Calu3 (cell line): ENCODE measurements at regions of chr17 and their contacts with region 1.

Region 1: GRCh38 chr17:2271985-2272702 is 31.4 kb downstream of the SMG6 start:
- DNase-seq: no peak
- H3K4me3 Mint-ChIP-seq: no peak overlapping the region
- H3K27ac Mint-ChIP-seq: no peak overlapping the region
- H3K4me1 Mint-ChIP-seq: no peaks in the 10 kb centered on the region
- H3K27me3 Mint-ChIP-seq: no peaks in the 10 kb centered on the region
- CTCF ChIP-seq: no peak

Region 2: DNA sequence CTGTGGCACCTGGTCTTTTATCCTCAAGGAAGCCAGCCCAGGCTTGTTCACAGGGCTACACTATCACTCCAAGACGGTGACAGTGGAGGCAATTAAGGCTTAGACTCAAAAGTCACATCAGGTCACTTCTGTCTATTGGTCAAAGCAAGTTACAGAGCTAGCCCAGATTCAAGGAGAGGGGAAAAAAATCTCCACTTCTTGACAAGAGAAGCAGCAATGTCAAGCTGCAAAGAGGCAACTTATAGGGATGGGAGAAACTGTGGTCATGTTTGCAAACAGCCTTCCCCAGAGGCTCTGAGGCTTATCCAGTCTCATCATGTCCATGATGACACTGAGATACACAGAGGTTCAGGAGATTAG is 478.7 kb before region 1 on chr17:
- CTCF ChIA-PET with region 1: interaction called, 10 read pairs
- intact Hi-C with region 1: no loop called
- DNase-seq: no peak
- H3K4me3 Mint-ChIP-seq: no peak overlapping the region
- H3K27ac Mint-ChIP-seq: no peak overlapping the region
- H3K4me1 Mint-ChIP-seq: no peaks in the 10 kb centered on the region
- H3K27me3 Mint-ChIP-seq: no peaks in the 10 kb centered on the region
- CTCF ChIP-seq: no peak